Breast epithelium (tissue), 4 donors: ENCODE measurements at regions of chr14 and their contacts with region 1.

Region 1: GRCh38 chr14:51981218-51981854 is 8.0 kb upstream of the RTRAF start:
- DNase-seq: no peak
- H3K4me3 ChIP-seq: no peak overlapping the region
- H3K27ac ChIP-seq: no peak overlapping the region
- H3K4me1 ChIP-seq: no peaks in the 10 kb centered on the region
- H3K27me3 ChIP-seq: no peaks in the 10 kb centered on the region
- CTCF ChIP-seq: no peak
- POLR2A ChIP-seq: no peak

Region 2: DNA sequence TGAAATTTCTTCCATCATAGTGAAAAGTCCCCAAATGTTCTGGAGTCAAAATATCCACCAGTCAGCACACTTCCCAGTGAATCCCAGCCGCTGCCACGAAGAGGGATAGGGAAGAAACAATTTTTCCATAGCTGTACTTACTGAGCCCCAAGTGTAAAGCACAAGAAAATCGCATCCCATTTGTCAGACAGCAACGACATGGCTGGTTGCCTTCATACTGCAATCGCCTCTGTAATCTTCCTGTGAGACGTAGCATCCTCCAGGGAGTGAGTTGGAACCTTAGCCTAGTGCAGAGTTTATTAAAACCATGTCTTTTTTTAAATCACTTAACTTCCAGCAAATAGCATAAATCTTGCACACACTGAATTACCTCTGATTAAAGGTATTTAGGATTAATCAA is 64.1 kb before region 1 on chr14:
- intact Hi-C with region 1: loop called (anchors 2 kb)
- DNase-seq: no peak
- H3K4me3 ChIP-seq: no peak overlapping the region
- H3K27ac ChIP-seq: peak overlapping the region; percentile 22 to 71
- H3K4me1 ChIP-seq: no peaks in the 10 kb centered on the region
- H3K27me3 ChIP-seq: no peaks in the 10 kb centered on the region
- CTCF ChIP-seq: no peak
- POLR2A ChIP-seq: no peak

Region 3: DNA sequence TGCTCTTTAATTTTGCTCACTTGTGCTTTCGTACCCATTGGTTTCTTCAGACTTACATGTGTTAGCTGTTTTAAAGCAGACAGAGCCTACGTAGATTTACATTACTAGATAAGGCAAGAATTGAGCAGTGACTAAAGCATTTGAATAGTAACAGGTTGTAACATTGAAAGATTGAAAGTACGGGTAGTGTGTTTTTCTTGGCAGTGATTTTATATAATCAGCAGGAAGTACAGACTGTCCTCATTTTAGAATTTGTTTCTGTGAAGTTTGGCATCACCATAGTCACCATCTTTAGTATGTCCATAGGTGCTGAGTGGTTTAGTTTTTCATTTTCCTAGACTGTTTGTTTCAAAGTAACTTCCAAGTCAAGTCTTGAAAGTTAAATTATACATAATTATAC is 22.0 kb after region 1 on chr14:
- intact Hi-C with region 1: no loop called
- DNase-seq: no peak
- H3K4me3 ChIP-seq: no peak overlapping the region
- H3K27ac ChIP-seq: no peak overlapping the region
- H3K4me1 ChIP-seq: no peaks in the 10 kb centered on the region
- H3K27me3 ChIP-seq: no peaks in the 10 kb centered on the region
- CTCF ChIP-seq: no peak
- POLR2A ChIP-seq: no peak

Region 4: DNA sequence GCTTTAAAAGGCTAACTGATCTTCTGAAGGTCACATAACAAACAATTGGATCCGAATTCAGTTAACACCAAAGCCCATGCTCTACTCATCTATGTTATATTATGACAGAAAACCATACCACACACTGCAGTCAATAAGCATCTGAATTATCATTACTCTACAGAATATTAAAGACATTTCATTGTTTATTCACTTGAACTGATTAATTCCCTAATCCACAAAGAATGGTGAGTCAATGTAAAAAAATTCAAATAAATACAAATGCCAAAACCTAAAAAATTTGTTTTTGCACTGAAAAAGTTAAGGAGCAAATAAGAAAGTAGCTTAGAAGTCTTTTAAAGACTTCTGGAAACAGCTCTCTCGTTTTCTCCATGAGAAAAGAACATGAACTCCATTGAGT is 73.8 kb after region 1 on chr14:
- intact Hi-C with region 1: loop called (anchors 2 kb)
- DNase-seq: no peak
- H3K4me3 ChIP-seq: no peak overlapping the region
- H3K27ac ChIP-seq: peak overlapping the region in 1 of 2 donors; percentile 83
- H3K4me1 ChIP-seq: peaks cover 0 to 6% of the 10 kb centered on the region in 2 donors
- H3K27me3 ChIP-seq: no peaks in the 10 kb centered on the region
- CTCF ChIP-seq: no peak
- POLR2A ChIP-seq: no peak